ENCODE measurements at regions of chr10 and their contacts with region 1.

Region 1: GRCh38 chr10:74156919-74157289 is 5.9 kb downstream of the ADK start:
- DNase-seq: no peak
- ATAC-seq: no peak
- H3K4me3 Mint-ChIP-seq: no peak overlapping the region
- H3K27ac Mint-ChIP-seq: no peak overlapping the region
- H3K4me1 Mint-ChIP-seq: peaks cover 20% of the 10 kb centered on the region
- H3K27me3 Mint-ChIP-seq: no peaks in the 10 kb centered on the region

Region 2: GRCh38 chr10:74123081-74123480 is 33.8 kb before region 1 on chr10:
- CTCF ChIA-PET with region 1: no interaction called
- POLR2A ChIA-PET with region 1: no interaction called
- DNase-seq: no peak
- ATAC-seq: no peak
- H3K4me3 Mint-ChIP-seq: no peak overlapping the region
- H3K27ac Mint-ChIP-seq: no peak overlapping the region
- H3K4me1 Mint-ChIP-seq: peaks cover under 1% of the 10 kb centered on the region
- H3K27me3 Mint-ChIP-seq: no peaks in the 10 kb centered on the region

Region 3: DNA sequence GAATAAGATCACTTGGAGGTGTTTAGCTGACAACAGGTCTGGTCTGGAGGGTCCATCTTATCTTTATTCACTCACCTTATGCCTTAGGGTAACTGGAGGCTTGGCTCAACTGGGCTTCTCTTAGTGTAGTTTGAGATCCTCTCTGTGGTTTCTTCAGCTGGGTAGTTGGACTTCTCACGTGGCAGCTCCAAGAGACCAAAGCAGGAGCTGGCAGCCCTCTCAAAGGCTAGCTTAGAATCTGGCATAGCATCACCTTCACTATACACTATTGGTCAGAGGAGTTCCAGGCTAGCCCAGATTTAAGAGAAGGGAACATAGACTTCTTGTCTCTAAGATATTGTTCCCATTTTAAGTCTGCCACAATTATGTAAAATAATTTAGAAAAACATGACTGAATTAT is 10.5 kb after region 1 on chr10:
- CTCF ChIA-PET with region 1: interaction called, 11 read pairs
- POLR2A ChIA-PET with region 1: no interaction called
- DNase-seq: no peak
- ATAC-seq: no peak
- H3K4me3 Mint-ChIP-seq: no peak overlapping the region
- H3K27ac Mint-ChIP-seq: no peak overlapping the region
- H3K4me1 Mint-ChIP-seq: peaks cover 35% of the 10 kb centered on the region
- H3K27me3 Mint-ChIP-seq: no peaks in the 10 kb centered on the region

Region 4: GRCh38 chr10:74439213-74439612 is 282.3 kb after region 1 on chr10:
- CTCF ChIA-PET with region 1: no interaction called
- POLR2A ChIA-PET with region 1: no interaction called
- DNase-seq: no peak
- ATAC-seq: no peak
- H3K4me3 Mint-ChIP-seq: no peak overlapping the region
- H3K27ac Mint-ChIP-seq: no peak overlapping the region
- H3K4me1 Mint-ChIP-seq: peaks cover 3% of the 10 kb centered on the region
- H3K27me3 Mint-ChIP-seq: no peaks in the 10 kb centered on the region